ENCODE measurements at regions of chr13 and their contacts with region 1.

Region 1: DNA sequence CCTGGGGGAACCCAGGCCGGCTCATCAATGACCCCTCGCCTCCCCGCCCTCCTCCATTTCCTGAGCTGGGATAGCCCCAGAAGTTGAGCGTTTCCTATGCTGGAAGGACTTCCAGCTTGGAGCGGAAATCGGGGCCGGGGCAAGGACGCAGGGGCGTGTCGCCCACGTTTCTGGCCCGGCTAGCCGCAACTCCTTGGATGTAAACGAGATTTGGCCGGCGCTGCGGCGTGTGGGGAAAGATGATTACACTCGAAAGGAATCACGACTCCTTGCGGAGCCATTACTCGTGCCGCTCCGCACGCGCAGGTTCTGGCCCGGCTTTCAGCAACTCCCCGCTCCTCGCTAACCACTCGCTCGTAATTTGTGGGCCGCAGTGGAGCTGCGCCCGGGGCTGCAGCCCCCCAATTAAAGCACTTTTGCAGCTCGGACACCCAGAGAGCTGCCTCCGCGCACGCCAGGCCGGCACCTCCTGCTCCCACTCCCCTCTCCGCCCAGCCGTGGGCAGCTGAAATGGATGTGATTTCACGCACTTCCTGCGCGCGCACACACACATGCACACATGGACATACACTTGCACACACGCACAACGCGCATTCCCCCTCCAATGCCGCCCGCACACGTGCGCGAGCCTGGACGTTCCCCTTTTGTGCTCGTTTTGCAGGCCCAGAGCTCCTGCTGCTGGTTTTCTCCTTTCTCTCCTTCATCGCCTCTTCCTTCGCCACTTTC is 15.7 kb downstream of the ZIC5 start:
- DNase-seq: no peak
- H3K4me3 Mint-ChIP-seq: peak overlapping the region; percentile 35
- H3K27ac Mint-ChIP-seq: no peak overlapping the region
- H3K4me1 Mint-ChIP-seq: peaks cover 7% of the 10 kb centered on the region
- H3K27me3 Mint-ChIP-seq: peaks cover 77% of the 10 kb centered on the region

Region 2: DNA sequence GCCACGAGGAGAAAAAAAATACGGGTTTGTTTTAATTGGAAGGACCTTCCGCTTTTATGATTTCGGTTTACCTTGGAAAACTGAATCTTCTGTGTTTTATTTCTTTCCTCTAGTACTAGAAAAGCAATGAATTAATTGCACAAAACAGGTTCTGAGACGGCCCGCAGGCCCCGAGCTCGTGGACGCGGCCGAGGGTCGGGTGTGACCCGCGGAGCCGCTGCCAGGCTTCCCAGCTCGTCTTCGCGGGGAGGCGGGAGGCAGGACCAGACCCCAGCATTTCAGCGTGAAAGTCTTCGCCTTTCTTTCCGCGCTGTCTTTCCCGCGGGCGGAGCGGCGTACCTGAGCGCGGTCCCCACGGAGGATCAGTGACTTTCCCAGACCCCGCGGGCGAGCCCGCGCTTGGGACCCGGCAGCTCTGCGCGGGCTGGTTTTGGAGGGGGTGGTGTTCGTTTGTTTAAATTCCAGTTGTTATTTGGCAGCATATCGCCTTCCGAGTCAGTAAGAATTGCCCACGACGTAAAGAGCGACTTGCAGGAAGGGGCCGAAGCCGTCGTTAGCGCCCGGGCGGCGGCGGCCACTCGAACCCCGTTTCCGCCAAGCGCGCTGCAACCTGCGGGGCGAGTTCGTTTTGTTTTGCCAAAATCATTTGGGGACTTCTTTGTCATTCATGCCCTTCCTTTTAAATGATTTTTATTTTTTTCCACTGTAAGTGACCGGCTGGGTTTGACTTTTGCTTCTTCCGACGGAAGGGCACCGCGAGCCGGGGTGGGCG is 60.5 kb before region 1 on chr13:
- intact Hi-C with region 1: loop called (anchors 5 kb)
- DNase-seq: peak; percentile 67
- H3K4me3 Mint-ChIP-seq: peak overlapping the region; percentile 68
- H3K27ac Mint-ChIP-seq: no peak overlapping the region
- H3K4me1 Mint-ChIP-seq: peaks cover 8% of the 10 kb centered on the region
- H3K27me3 Mint-ChIP-seq: peaks cover 63% of the 10 kb centered on the region

Region 3: GRCh38 chr13:99969919-99970621 is 14.2 kb after region 1 on chr13:
- intact Hi-C with region 1: loop called (anchors 1 kb)
- DNase-seq: peak; percentile 77
- H3K4me3 Mint-ChIP-seq: peak overlapping the region; percentile 70
- H3K27ac Mint-ChIP-seq: peak overlapping the region; percentile 80
- H3K4me1 Mint-ChIP-seq: peaks cover 17% of the 10 kb centered on the region
- H3K27me3 Mint-ChIP-seq: peaks cover 70% of the 10 kb centered on the region

Region 4: DNA sequence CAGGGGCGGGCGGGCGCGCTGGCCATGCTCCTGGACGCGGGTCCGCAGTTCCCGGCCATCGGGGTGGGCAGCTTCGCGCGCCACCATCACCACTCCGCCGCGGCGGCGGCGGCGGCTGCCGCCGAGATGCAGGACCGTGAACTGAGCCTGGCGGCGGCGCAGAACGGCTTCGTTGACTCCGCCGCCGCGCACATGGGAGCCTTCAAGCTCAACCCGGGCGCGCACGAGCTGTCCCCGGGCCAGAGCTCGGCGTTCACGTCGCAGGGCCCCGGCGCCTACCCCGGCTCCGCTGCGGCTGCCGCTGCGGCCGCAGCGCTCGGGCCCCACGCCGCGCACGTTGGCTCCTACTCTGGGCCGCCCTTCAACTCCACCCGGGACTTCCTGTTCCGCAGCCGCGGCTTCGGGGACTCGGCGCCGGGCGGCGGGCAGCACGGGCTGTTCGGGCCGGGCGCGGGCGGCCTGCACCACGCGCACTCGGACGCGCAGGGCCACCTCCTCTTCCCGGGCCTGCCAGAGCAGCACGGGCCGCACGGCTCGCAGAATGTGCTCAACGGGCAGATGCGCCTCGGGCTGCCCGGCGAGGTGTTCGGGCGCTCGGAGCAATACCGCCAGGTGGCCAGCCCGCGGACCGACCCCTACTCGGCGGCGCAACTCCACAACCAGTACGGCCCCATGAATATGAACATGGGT is 26.3 kb after region 1 on chr13:
- intact Hi-C with region 1: loop called (anchors 2 kb)
- DNase-seq: peak; percentile 73
- H3K4me3 Mint-ChIP-seq: no peak overlapping the region
- H3K27ac Mint-ChIP-seq: no peak overlapping the region
- H3K4me1 Mint-ChIP-seq: peaks cover 13% of the 10 kb centered on the region
- H3K27me3 Mint-ChIP-seq: peaks cover 61% of the 10 kb centered on the region

Region 5: GRCh38 chr13:99987154-99988019 is 31.5 kb after region 1 on chr13:
- intact Hi-C with region 1: loop called (anchors 2 kb)
- DNase-seq: no peak
- H3K4me3 Mint-ChIP-seq: no peak overlapping the region
- H3K27ac Mint-ChIP-seq: peak overlapping the region; percentile 43
- H3K4me1 Mint-ChIP-seq: peaks cover 16% of the 10 kb centered on the region
- H3K27me3 Mint-ChIP-seq: peaks cover 84% of the 10 kb centered on the region

Measured in activated CD4-positive, alpha-beta T cell treated with anti-CD3 and anti-CD28 coated beads, Interleukin-2, amount 10 ng/mL, durations not matched to agents 24 days and 14 days (primary cell).